Mammary epithelial cell (primary cell): ENCODE measurements at regions of chr13 and their contacts with region 1.

Region 1: DNA sequence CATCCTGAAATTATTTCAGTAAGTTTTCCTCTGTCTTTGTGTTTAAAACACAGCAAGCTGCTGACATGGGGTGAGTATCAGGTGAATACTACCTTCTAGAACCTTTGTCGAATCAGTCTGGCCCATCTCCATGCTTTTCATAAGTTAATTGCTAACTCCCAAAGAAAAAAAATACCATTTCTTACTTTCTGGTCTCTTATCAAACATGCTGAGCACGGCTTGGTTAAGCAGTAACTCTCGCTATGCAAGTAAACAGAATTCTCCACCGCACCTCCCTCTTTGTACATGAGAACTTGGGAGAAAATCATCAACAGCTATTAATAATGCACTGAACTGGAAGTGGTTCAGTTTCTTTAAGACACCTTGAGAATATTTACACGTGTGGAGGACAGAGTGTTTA is 88.6 kb downstream of the FGF9 start:
- DNase-seq: no peak
- H3K4me3 ChIP-seq: no peak overlapping the region
- H3K27ac ChIP-seq: no peak overlapping the region
- H3K4me1 ChIP-seq: no peaks in the 10 kb centered on the region
- H3K27me3 ChIP-seq: no peaks in the 10 kb centered on the region
- CTCF ChIP-seq: no peak

Region 2: DNA sequence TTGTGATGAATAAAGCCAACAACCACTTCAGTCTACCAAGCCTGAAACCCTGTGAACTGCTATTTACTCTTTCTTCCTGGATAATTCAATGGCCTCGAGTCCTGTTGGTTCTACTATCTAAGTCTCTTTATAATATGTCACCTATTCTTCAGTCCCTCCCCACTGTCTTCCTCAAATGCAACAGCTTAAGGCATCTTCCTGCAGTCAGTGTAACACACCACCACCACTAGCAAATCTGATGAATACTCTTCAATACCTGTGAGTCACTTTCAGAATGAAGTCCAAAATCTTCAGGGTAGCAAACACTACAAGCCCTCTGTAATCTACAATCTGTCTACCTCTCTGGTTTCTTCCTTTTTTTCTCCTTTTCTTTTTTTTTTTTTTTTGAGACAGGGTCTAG is 333.2 kb before region 1 on chr13:
- CTCF ChIA-PET with region 1: no interaction called
- dilution Hi-C with region 1: no loop called
- in situ Hi-C with region 1: no loop called
- intact Hi-C with region 1: no loop called
- DNase-seq: no peak
- H3K4me3 ChIP-seq: no peak overlapping the region
- H3K27ac ChIP-seq: no peak overlapping the region
- H3K4me1 ChIP-seq: no peaks in the 10 kb centered on the region
- H3K27me3 ChIP-seq: no peaks in the 10 kb centered on the region
- CTCF ChIP-seq: no peak

Region 3: GRCh38 chr13:21670883-21671619 is 88.4 kb before region 1 on chr13 and contains the start of gene FGF9:
- CTCF ChIA-PET with region 1: no interaction called
- dilution Hi-C with region 1: no loop called
- in situ Hi-C with region 1: no loop called
- intact Hi-C with region 1: no loop called
- DNase-seq: peak; percentile 84
- H3K4me3 ChIP-seq: peak within 1 kb of the TSS; percentile 56 to 88 (median 60)
- H3K27ac ChIP-seq: no peak within 1 kb of the TSS
- H3K4me1 ChIP-seq: peaks cover 26% of the 10 kb centered on the region
- H3K27me3 ChIP-seq: peaks cover 21% of the 10 kb centered on the region
- CTCF ChIP-seq: peak in 1 of 2 donors; percentile 33
- total RNA-seq, gene FGF9: not detected

Region 4: DNA sequence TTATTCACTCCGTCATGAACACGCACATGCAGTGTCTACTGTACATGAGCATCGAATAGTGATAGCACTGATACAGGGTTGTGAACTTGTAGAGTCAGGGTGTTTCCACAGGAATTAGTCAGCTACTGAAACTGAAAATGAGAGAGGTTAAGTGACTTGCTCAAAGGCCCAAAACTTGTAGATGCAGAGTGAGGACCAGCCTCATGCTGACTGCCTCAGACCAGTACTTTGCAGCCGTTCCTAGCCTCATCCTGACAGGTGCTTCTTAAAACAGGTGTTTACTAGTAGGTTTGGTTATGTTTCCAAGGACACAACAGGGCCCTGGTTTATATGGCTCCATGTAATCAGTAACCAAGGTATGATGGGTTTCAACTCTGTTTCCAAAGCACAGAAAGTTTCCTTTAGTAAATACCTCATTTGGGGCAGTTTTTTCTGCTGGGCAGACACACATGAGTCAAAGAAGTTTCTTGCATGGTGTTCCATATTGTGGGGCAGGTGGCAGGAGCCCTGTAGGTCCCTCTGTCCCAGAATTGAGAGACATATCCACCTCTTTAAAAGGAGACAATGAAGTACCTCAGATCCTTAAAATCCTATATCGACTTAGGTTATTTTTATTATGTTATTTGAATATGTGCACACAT is 72.6 kb before region 1 on chr13:
- CTCF ChIA-PET with region 1: no interaction called
- dilution Hi-C with region 1: loop called (anchors 5 kb)
- in situ Hi-C with region 1: no loop called
- intact Hi-C with region 1: no loop called
- DNase-seq: no peak
- H3K4me3 ChIP-seq: no peak overlapping the region
- H3K27ac ChIP-seq: no peak overlapping the region
- H3K4me1 ChIP-seq: peaks cover 37% of the 10 kb centered on the region
- H3K27me3 ChIP-seq: no peaks in the 10 kb centered on the region
- CTCF ChIP-seq: no peak

Region 5: DNA sequence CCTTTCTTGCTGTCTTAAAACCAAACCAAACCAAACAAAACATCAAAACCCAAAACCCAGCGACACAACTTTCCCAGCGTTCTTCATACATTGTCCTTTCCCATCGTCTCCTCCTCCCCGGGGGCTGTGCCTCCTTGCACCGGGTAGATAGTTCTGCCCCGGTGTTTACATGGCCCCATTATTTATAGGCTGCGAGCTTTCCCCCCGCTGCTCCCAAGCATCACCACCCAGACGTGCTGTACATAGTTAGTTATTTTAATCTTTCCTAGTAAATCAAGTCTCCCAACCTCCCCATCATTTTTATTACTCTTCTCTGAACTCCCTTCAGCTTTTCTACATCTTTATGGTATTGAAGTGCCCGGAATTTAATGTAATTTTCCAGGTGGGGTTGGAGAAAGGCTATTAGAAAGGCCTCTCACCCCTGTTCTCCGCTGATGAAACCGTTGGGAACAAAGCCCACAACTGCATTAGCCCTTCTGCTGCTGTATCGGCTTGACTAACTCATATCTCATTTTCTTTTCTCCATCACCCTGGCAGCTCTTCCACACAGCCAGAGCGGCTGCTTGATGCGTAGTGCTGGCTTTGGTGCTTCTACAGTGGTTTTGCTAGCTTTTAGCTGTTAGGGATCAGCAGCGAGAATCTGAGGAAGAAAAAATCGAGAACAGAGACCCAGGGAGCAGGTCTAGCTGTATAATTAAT is 35.5 kb before region 1 on chr13:
- CTCF ChIA-PET with region 1: no interaction called
- dilution Hi-C with region 1: loop called (anchors 5 kb)
- in situ Hi-C with region 1: no loop called
- intact Hi-C with region 1: no loop called
- DNase-seq: no peak
- H3K4me3 ChIP-seq: no peak overlapping the region
- H3K27ac ChIP-seq: no peak overlapping the region
- H3K4me1 ChIP-seq: no peaks in the 10 kb centered on the region
- H3K27me3 ChIP-seq: no peaks in the 10 kb centered on the region
- CTCF ChIP-seq: no peak

Region 6: GRCh38 chr13:21817878-21818277 is 58.4 kb after region 1 on chr13:
- CTCF ChIA-PET with region 1: no interaction called
- dilution Hi-C with region 1: loop called (anchors 5 kb)
- in situ Hi-C with region 1: no loop called
- intact Hi-C with region 1: no loop called
- DNase-seq: no peak
- H3K4me3 ChIP-seq: no peak overlapping the region
- H3K27ac ChIP-seq: no peak overlapping the region
- H3K4me1 ChIP-seq: no peaks in the 10 kb centered on the region
- H3K27me3 ChIP-seq: no peaks in the 10 kb centered on the region
- CTCF ChIP-seq: no peak

Region 7: DNA sequence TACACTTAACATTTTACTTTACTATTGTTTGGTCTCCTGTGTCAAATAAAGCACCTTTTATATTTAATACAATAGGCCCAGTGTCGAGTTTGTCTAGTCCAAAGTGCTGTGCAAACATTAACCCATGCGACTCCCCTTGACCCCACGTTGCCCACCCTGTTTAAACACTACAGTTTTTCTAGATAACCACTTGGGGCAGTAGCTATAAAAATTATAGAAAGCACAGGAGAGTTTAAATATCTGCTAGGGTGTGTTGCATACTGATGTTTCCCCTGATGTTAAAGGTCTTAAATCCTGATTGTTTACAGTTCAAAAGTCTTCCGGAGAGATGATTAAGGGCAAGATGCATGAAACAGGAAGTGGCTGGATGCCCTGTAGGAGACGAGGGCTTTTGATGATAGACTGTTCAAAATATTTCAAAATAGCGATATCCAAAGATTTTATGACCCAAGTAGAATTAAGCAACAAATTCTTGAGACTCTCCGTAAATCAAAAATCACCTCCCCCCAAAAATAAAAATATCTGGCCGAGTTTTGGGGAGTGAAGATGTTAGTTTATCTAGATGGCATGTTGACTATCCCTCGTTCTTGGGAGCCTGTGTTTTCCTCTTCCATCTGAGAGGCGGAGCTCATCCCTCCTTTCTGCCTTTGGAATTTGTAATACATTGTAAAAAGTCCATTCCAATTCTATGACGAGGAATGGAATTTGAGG is 78.5 kb after region 1 on chr13:
- CTCF ChIA-PET with region 1: no interaction called
- dilution Hi-C with region 1: no loop called
- in situ Hi-C with region 1: no loop called
- intact Hi-C with region 1: no loop called
- DNase-seq: no peak
- H3K4me3 ChIP-seq: no peak overlapping the region
- H3K27ac ChIP-seq: no peak overlapping the region
- H3K4me1 ChIP-seq: no peaks in the 10 kb centered on the region
- H3K27me3 ChIP-seq: no peaks in the 10 kb centered on the region
- CTCF ChIP-seq: no peak

Region 8: DNA sequence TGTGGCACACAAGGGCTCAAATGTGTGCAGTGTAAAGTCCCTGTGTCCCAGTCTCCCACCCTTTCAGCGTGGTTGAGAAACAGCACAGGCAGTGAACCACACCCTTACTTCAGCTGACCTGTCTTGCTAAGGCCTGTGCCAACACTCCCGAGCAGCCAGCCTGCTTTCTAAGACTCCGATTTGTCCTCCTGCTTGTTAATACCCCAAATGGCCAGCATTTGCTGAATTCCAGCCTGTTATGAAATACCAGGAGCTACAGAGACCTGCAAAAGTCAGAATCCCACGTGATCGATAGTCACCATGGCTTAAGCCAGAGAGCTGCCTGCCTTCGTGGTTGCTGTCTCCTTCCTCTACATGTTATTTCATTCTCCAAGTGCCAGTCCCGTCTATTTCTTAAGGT is 111.9 kb after region 1 on chr13:
- CTCF ChIA-PET with region 1: no interaction called
- dilution Hi-C with region 1: no loop called
- in situ Hi-C with region 1: no loop called
- intact Hi-C with region 1: no loop called
- DNase-seq: no peak
- H3K4me3 ChIP-seq: no peak overlapping the region
- H3K27ac ChIP-seq: no peak overlapping the region
- H3K4me1 ChIP-seq: no peaks in the 10 kb centered on the region
- H3K27me3 ChIP-seq: no peaks in the 10 kb centered on the region
- CTCF ChIP-seq: no peak